ENCODE measurements at regions of chr15 and their contacts with region 1.

Region 1: GRCh38 chr15:74373731-74374647 is 6.5 kb upstream of the CYP11A1 start:
- DNase-seq: peak; percentile 90
- H3K4me3 Mint-ChIP-seq: peak overlapping the region; percentile 85
- H3K27ac Mint-ChIP-seq: peak overlapping the region; percentile 78
- H3K4me1 Mint-ChIP-seq: peaks cover 50% of the 10 kb centered on the region
- H3K27me3 Mint-ChIP-seq: peaks cover 26% of the 10 kb centered on the region

Region 2: DNA sequence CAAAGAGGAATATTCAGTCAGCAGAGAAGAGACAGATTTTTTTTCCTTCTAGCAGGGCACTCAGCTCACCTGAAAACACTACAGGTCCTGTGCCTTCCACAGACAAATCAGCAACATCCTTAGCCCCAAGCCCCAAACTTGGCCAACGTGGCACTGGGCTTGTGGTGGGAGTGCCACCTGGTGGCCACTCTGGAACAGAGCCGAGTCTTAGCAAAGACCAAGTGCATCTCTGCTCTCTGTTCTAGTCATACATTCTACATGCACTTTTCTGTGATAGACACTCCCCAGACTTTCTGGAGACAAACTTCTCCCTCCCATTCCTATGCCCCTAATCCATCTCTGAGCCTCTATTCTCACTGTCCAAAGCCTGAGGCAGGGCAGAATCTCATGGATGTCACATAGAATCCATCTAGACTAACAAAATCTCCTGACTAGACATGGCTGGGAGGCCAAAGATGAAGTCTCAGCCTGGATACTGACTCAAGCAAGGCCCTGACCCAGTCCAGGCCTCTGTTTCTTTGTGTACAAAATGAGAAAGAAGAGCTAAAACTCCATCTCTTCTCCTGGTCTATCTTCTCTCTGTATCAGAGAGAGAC is 64.8 kb after region 1 on chr15:
- intact Hi-C with region 1: loop called (anchors 1 kb)
- DNase-seq: peak; percentile 73
- H3K4me3 Mint-ChIP-seq: no peak overlapping the region
- H3K27ac Mint-ChIP-seq: peak overlapping the region; percentile 1
- H3K4me1 Mint-ChIP-seq: peaks cover 58% of the 10 kb centered on the region
- H3K27me3 Mint-ChIP-seq: no peaks in the 10 kb centered on the region

Region 3: GRCh38 chr15:74615508-74616365 is 241.7 kb after region 1 on chr15 and contains the start of gene CLK3:
- intact Hi-C with region 1: loop called (anchors 1 kb)
- DNase-seq: peak; percentile 94
- H3K4me3 Mint-ChIP-seq: peak within 1 kb of the TSS; percentile 93
- H3K27ac Mint-ChIP-seq: peak within 1 kb of the TSS; percentile 95
- H3K4me1 Mint-ChIP-seq: peaks cover 33% of the 10 kb centered on the region
- H3K27me3 Mint-ChIP-seq: peaks cover 5% of the 10 kb centered on the region
- total RNA-seq, gene CLK3: 103 and 107 TPM in 2 replicates

Region 4: DNA sequence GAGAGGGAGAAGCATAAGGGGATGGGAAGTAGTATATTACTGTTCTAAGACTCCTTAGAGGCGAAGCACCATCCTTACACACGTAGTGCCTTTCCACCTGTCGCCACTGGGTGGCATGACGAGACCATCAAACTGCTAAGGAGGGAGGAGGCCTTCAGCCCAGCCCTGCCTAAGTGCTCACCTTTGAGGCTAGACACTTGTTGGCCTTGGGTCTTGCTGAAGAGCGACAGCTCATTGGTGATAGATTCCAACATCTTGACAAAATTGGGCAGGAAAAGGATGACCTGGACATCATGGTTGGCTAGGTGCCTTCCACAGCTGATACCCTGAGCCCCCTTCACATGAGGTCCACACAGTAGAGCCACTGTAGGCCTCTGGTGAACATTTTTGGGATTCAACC is 261.2 kb after region 1 on chr15:
- intact Hi-C with region 1: loop called (anchors 1 kb)
- DNase-seq: peak; percentile 61
- H3K4me3 Mint-ChIP-seq: no peak overlapping the region
- H3K27ac Mint-ChIP-seq: no peak overlapping the region
- H3K4me1 Mint-ChIP-seq: peaks cover 11% of the 10 kb centered on the region
- H3K27me3 Mint-ChIP-seq: no peaks in the 10 kb centered on the region

Region 5: GRCh38 chr15:74937596-74938296 is 563.8 kb after region 1 on chr15 and contains the start of gene COX5A:
- intact Hi-C with region 1: loop called (anchors 5 kb)
- DNase-seq: peak; percentile 91
- H3K4me3 Mint-ChIP-seq: peak within 1 kb of the TSS; percentile 91
- H3K27ac Mint-ChIP-seq: peak within 1 kb of the TSS; percentile 91
- H3K4me1 Mint-ChIP-seq: peaks cover 22% of the 10 kb centered on the region
- H3K27me3 Mint-ChIP-seq: no peaks in the 10 kb centered on the region
- total RNA-seq, gene COX5A: 273 and 290 TPM in 2 replicates

Measured in activated T-helper 1 cell treated with anti-CD3 and anti-CD28 coated beads, Interleukin-12 subunit alpha, Interleukin-12 subunit beta, Interleukin-2, Interleukin-4 antibody, amounts not matched to agents 30 ng/mL and 10 ng/mL and 1 ng/mL, durations not matched to agents 14 hours and 24 hours and 36 hours (primary cell).